Gastrocnemius medialis (tissue), 4 donors: ENCODE measurements at regions of chr13 and their contacts with region 1.

Region 1: GRCh38 chr13:36346222-36347083 is at the start of gene SPART:
- DNase-seq: peak; percentile 88 to 89
- ATAC-seq: peak; percentile 88 to 91
- H3K4me3 ChIP-seq: peak within 1 kb of the TSS; percentile 76 to 85 (median 80)
- H3K27ac ChIP-seq: peak within 1 kb of the TSS; percentile 90 to 97 (median 94)
- H3K4me1 ChIP-seq: peaks cover 8 to 21% of the 10 kb centered on the region in 2 donors
- H3K27me3 ChIP-seq: no peaks in the 10 kb centered on the region
- CTCF ChIP-seq: peak; percentile 91 to 98 (median 97)
- POLR2A ChIP-seq: peak; percentile 71 to 76
- total RNA-seq, gene SPART: 34.1 to 58.7 (median 48.8) TPM

Region 2: GRCh38 chr13:36297366-36298338 is 48.8 kb before region 1 on chr13 and contains the start of gene CCDC169:
- in situ Hi-C with region 1: no loop called
- intact Hi-C with region 1: loop called (anchors 5 kb)
- DNase-seq: peak; percentile 40 to 64
- ATAC-seq: peak; percentile 72 to 84
- H3K4me3 ChIP-seq: peak within 1 kb of the TSS; percentile 72 to 87 (median 78)
- H3K27ac ChIP-seq: peak within 1 kb of the TSS; percentile 60 to 72 (median 68)
- H3K4me1 ChIP-seq: peaks cover 13 to 15% of the 10 kb centered on the region in 2 donors
- H3K27me3 ChIP-seq: no peaks in the 10 kb centered on the region
- CTCF ChIP-seq: no peak
- POLR2A ChIP-seq: peak; percentile 20 to 23
- total RNA-seq, gene CCDC169: 0.10 to 1.7 TPM in 2 of 4 donors, not detected in the others

Region 3: DNA sequence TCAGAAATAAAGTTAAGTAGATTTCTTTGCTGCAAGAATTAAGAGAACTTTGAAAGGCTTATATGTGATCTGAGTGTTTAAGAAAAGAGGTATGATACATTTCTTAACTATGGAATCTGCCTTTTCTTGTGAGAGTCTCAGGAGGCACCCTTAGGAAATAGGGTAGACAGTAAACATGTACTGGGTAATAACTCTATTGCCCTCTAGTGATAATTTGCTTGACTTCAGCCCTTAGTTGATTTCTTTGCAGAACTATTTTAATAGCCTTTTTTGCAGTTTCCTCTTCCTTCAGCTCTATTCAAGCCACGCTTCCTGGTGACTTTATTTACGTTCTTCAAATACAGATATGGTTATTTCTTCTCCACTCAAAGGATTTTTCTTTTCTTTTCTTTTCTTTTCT is 48.8 kb after region 1 on chr13:
- in situ Hi-C with region 1: no loop called
- intact Hi-C with region 1: loop called (anchors 5 kb)
- DNase-seq: no peak
- ATAC-seq: peak in 1 of 2 donors; percentile 42
- H3K4me3 ChIP-seq: no peak overlapping the region
- H3K27ac ChIP-seq: no peak overlapping the region
- H3K4me1 ChIP-seq: no peaks in the 10 kb centered on the region
- H3K27me3 ChIP-seq: no peaks in the 10 kb centered on the region
- CTCF ChIP-seq: peak in 1 of 5 experiments; percentile 35
- POLR2A ChIP-seq: no peak

Region 4: DNA sequence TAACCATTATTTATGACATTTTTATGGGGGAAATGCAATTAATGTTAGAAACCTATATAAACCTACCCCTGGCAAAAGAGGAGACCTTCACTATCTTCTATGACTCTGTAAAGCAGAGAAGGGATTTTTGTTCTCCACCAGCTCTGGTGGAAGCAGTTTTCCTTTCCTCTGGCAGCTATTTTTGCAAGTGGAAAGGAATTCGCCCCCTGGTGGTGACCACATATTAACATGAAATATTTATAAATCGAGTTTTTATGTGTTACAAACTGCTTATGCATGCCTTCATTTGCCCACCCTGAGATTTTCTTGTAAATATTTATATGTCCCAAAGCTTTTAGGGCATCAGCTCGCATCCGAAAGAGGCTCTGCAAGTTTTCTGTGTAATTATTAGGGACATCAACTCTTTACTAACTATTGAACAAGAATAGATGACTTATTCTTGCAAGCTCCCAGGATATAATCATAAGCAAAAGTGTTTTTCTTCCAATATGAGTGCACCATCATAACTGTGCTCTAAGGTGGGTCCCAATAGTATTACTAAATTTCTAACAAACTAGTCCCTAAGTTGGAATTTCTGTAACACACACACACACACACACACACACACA is 389.8 kb after region 1 on chr13:
- in situ Hi-C with region 1: no loop called
- intact Hi-C with region 1: loop called (anchors 1 kb)
- DNase-seq: no peak
- ATAC-seq: no peak
- H3K4me3 ChIP-seq: no peak overlapping the region
- H3K27ac ChIP-seq: no peak overlapping the region
- H3K4me1 ChIP-seq: no peaks in the 10 kb centered on the region
- H3K27me3 ChIP-seq: no peaks in the 10 kb centered on the region
- CTCF ChIP-seq: peak; percentile 36 to 63 (median 54)
- POLR2A ChIP-seq: no peak

Region 5: GRCh38 chr13:36818804-36819738 is 472.6 kb after region 1 on chr13 and contains the start of gene RFXAP:
- in situ Hi-C with region 1: no loop called
- intact Hi-C with region 1: loop called (anchors 1 kb)
- DNase-seq: peak; percentile 76 to 85
- ATAC-seq: peak; percentile 94 to 95
- H3K4me3 ChIP-seq: peak within 1 kb of the TSS; percentile 82 to 92 (median 84)
- H3K27ac ChIP-seq: peak within 1 kb of the TSS; percentile 78 to 84 (median 82)
- H3K4me1 ChIP-seq: peaks cover 10 to 16% of the 10 kb centered on the region in 2 donors
- H3K27me3 ChIP-seq: no peaks in the 10 kb centered on the region
- CTCF ChIP-seq: peak in 2 of 5 experiments; percentile 15 to 30
- POLR2A ChIP-seq: peak; percentile 50 to 52
- total RNA-seq, gene RFXAP: 0.71 to 3.0 (median 2.2) TPM

Region 6: GRCh38 chr13:36999054-36999714 is 652.7 kb after region 1 on chr13 and contains the start of gene ALG5:
- in situ Hi-C with region 1: loop called in 1 of 4 experiments (anchors 25 kb)
- intact Hi-C with region 1: loop called (anchors 5 kb)
- DNase-seq: peak; percentile 70 to 84
- ATAC-seq: peak; percentile 84 to 87
- H3K4me3 ChIP-seq: peak within 1 kb of the TSS; percentile 82 to 97 (median 91)
- H3K27ac ChIP-seq: peak within 1 kb of the TSS; percentile 90 to 97 (median 94)
- H3K4me1 ChIP-seq: peaks cover 21% of the 10 kb centered on the region in 2 donors
- H3K27me3 ChIP-seq: no peaks in the 10 kb centered on the region
- CTCF ChIP-seq: peak; percentile 82 to 99 (median 94)
- POLR2A ChIP-seq: peak; percentile 30 to 43
- total RNA-seq, gene ALG5: 9.8 to 20.9 (median 13.2) TPM